ENCODE measurements at regions of chr1 and their contacts with region 1.

Region 1: DNA sequence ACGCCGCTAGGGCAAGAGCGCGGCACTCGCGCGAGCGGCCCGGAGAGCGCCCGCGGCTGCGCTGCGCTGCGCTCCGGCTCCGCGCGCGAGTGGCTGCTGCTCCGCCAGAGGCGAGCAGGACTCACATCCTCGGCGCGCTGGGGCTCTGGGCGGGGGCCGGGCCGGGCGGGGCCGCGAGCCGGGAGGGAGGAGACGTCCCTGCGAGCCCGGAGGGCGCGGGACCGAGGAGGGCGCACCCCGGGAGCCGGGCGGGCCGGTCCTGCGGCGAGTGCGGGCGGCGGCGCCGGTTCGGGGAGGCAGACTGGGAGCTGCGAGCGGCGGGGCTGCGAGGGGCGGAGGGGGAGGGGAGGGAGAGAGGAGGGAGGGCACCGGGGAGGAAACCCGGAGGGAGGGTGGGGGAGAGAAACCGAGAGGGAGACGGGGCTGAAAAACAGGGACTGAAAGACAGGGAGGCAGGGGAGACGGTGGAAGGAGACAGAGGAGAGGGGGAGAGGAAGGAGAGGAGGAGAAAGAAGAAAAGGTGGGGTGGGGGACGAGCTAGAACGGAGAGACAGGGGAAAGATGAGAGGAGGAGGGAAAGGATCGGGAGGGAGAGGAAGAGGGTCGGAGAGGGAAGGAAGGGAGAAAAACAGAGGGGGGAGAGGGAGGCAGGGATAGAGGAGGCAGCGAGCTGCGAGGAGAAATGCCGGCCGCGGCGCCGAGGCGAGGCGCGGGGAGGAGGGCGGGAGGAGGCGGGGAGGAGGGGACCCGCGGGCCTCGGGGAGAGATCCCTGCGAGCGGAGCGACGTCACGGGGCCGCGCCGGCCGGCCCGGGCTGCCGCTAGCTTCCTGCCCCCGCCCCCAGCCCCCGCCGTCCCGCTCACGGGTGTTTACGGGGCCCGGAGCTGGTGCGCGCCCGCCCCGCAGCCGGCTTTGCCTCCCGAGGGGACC is at the start of gene CAMK2N1:
- DNase-seq: peak; percentile 64 to 66
- ATAC-seq: peak; percentile 72 to 77
- H3K4me3 ChIP-seq: peak within 1 kb of the TSS; percentile 95
- H3K27ac ChIP-seq: peak within 1 kb of the TSS; percentile 98 to 99
- H3K4me1 ChIP-seq: peaks cover 29% of the 10 kb centered on the region
- CTCF ChIP-seq: no peak
- EP300 ChIP-seq: no peak
- POLR2A ChIP-seq: no peak; the same call in none of the 2 replicates
- RAD21 ChIP-seq: no peak
- polyA plus RNA-seq, gene CAMK2N1: 38.9 and 49.7 TPM in 2 replicates

Region 2: DNA sequence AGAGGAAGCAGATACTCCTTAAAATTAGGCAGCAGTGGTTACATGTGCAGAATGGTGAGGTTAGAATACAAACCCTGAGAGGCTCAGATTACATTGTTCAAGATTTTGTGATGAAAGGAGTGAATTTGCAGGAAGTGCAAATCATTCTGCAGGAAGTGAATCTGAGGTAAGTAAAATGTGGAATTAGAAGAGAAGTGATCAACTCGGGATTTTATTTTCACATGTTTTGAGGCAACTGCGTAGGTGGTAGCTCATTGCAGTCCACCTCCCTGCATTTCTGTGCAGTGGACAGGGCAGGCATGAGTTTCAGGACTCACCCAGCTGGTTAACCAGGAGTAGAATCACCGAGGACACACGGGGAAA is 297.4 kb before region 1 on chr1:
- CTCF ChIA-PET with region 1: no interaction called
- POLR2A ChIA-PET with region 1: interaction called, 10 read pairs
- DNase-seq: no peak
- ATAC-seq: no peak
- H3K4me3 ChIP-seq: no peak overlapping the region
- H3K27ac ChIP-seq: no peak overlapping the region
- H3K4me1 ChIP-seq: peaks cover 3% of the 10 kb centered on the region; the same call in 1 of the 3 replicates
- CTCF ChIP-seq: no peak
- EP300 ChIP-seq: no peak
- POLR2A ChIP-seq: no peak
- RAD21 ChIP-seq: no peak

Region 3: DNA sequence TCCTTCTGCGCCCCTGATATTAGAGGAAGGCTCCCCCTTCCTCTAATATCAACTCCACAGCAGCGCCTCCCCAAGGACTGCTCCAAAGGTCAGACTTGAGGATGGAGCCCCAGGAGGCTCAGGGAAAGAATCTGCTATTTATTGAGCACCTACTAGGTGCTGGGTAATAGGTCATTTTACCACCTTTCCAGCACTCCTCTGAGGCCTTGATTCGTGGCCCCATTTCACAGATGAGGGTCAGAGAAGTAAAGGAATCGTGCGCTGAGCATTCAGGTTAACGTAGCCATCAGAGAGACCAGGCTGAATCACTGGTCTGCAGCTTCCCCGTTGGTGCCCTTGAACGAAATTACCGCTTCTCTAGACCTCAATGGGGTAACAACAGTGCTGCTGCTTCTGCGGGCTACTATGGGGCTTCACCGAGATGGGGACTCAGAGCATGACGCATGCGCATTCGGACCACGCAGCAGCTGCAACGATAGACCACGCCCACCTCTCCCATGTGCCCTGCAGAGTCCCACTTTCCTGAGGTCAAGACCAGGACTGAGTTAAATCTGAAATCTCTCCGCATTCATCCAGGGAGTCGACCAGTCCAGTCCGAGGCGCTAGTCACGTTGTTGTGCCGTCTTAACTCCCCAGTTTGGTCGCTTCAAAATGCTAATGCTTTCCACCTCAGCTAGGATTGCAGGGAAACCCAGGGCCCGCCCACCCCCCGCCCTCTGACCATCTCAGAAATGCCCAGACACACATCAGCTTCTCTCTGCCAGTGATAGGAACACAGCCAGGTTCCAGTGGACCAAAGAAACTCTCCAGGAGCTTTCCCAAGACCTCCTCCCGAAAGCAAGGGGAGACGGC is 12.7 kb before region 1 on chr1:
- CTCF ChIA-PET with region 1: interaction called, 7 read pairs
- POLR2A ChIA-PET with region 1: interaction called, 21 read pairs
- DNase-seq: peak; percentile 85 to 87
- ATAC-seq: peak; percentile 58 to 66
- H3K4me3 ChIP-seq: no peak overlapping the region
- H3K27ac ChIP-seq: peak overlapping the region; percentile 98 to 99
- H3K4me1 ChIP-seq: peaks cover 60% of the 10 kb centered on the region
- CTCF ChIP-seq: no peak
- EP300 ChIP-seq: no peak
- POLR2A ChIP-seq: 0 out of 2 replicates have a peak, but pooled peaks have one; percentile 24
- RAD21 ChIP-seq: no peak

Region 4: DNA sequence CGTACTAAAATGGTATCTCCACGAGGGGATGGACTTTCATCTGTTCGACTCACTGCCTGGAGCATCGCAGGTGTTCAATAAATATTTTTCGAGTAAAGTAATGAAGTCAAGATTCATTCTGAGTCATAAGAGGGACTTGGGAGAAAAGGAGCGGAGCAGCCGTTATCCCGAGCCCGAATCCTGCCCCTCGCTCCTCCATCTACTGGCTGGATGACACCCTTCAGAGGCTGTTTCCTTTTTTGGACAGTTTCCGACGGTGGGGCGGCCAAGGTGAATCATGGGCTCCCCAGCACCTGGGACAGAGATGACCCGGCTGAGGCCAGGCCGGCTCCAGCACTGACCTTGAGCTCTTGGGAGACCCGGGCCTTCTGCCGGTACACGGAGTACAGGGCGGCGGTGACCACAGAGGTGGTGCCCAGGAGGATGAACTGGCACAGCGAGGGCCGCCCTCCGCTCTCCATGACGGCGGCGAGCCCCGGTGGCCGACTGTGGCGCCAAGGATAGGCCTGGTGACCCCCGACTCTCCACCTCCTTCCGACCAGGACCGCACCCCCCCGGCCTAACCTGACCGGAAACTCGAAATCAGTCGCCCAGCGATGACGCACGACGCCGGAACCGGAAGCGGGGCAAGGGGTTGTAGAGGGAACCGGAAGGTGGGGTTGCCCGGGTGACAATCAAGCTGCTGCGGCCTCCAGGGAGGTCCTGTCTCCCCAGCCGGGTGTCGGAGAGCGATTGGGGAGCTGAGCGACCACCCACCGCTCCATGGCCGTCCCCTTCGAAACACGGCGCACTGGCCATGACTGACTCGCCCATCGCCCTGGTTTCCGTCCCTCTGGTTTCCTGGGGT is 22.0 kb after region 1 on chr1 and contains the start of gene MUL1:
- CTCF ChIA-PET with region 1: interaction called, 3 read pairs
- POLR2A ChIA-PET with region 1: interaction called, 13 read pairs
- DNase-seq: peak; percentile 88 to 91
- ATAC-seq: peak; percentile 97 to 99
- H3K4me3 ChIP-seq: peak within 1 kb of the TSS; percentile 87
- H3K27ac ChIP-seq: peak within 1 kb of the TSS; percentile 84 to 89
- H3K4me1 ChIP-seq: peaks cover 9% of the 10 kb centered on the region; the same call in 2 of the 3 replicates
- CTCF ChIP-seq: no peak
- EP300 ChIP-seq: no peak
- POLR2A ChIP-seq: peak; percentile 43
- RAD21 ChIP-seq: no peak
- polyA plus RNA-seq, gene MUL1: 20.0 and 22.9 TPM in 2 replicates

Region 5: GRCh38 chr1:20574686-20575540 is 89.1 kb after region 1 on chr1:
- CTCF ChIA-PET with region 1: no interaction called
- POLR2A ChIA-PET with region 1: no interaction called
- DNase-seq: peak; percentile 80 to 82
- ATAC-seq: peak; percentile 94 to 97
- H3K4me3 ChIP-seq: no peak overlapping the region
- H3K27ac ChIP-seq: peak overlapping the region; percentile 13 to 80; a peak in 4 of 6 replicates
- H3K4me1 ChIP-seq: peaks cover 14% of the 10 kb centered on the region
- CTCF ChIP-seq: peak; percentile 70
- EP300 ChIP-seq: no peak
- POLR2A ChIP-seq: no peak
- RAD21 ChIP-seq: peak; percentile 82 to 90

Measured in A549 (cell line).